ENCODE measurements at regions of chr16 and their contacts with region 1.

Region 1: DNA sequence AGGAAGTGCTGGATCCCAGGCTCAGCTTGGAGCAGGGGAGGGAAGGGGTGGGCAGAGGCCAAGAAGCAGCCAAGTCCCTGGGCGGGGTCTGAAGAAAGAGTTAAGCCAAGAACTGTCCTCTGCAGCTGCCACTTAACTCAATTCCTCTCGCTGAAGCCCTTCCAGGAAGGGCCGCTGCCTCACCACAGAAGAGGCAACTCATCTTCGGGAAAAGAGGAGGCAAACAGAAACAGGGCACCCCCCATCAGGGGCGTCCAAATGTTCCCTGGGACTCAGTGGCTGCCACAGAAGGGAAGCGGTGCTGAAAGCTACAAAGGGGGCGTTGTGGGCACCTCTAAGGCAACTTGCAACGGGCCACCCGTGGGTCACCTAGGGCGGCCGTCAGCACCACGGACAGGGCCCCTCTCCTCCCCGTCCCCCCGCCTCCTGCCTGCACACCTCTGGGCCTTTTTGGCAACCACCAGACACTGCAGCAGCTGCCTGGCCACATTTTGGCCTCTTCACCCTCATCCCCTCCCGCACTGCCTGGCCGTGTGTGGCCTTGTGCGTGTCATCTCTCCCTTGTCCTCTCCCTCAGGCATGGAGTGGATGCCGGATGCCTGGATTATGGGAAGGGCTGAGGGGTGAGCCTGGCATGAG is 2.5 kb downstream of the TLCD3B start:
- DNase-seq: no peak
- ATAC-seq: peak; percentile 32 to 74 (median 70)
- H3K4me3 ChIP-seq: no peak overlapping the region
- H3K27ac ChIP-seq: no peak overlapping the region
- H3K4me1 ChIP-seq: peaks cover 2% of the 10 kb centered on the region
- H3K27me3 ChIP-seq: peaks cover 0 to 60% (median 15%) of the 10 kb centered on the region in 3 donors
- CTCF ChIP-seq: no peak

Region 2: DNA sequence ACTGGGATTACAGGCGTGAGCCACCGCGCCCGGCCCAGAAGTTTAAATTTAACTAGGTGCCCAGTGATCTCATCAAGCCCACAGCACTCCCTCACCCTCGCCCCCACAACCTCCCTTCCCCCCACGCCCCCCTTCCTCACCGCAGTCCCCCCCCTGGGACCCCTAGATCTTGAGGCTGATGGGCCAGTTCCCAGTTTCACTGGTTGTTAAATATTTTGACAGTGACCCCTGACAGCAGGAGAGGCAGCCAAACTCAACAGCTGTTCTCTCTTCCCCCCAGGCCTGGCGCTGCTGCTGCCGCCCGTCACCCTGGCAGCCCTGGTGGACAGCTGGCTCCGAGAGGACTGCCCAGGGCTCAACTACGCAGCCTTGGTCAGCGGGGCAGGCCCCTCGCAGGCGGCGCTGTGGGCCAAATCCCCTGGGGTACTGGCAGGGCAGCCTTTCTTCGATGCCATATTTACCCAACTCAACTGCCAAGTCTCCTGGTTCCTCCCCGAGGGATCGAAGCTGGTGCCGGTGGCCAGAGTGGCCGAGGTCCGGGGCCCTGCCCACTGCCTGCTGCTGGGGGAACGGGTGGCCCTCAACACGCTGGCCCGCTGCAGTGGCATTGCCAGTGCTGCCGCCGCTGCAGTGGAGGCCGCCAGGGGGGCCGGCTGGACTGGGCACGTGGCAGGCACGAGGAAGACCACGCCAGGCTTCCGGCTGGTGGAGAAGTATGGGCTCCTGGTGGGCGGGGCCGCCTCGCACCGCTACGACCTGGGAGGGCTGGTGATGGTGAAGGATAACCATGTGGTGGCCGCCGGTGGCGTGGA is 334.0 kb before region 1 on chr16:
- intact Hi-C with region 1: loop called in 1 of 2 experiments (anchors 10 kb)
- DNase-seq: peak; percentile 58 to 83
- ATAC-seq: peak; percentile 93 to 95 (median 95)
- H3K4me3 ChIP-seq: no peak overlapping the region
- H3K27ac ChIP-seq: peak overlapping the region; percentile 34
- H3K4me1 ChIP-seq: no peaks in the 10 kb centered on the region
- H3K27me3 ChIP-seq: no peaks in the 10 kb centered on the region
- CTCF ChIP-seq: no peak

Region 3: GRCh38 chr16:30052671-30053372 is 24.3 kb after region 1 on chr16:
- intact Hi-C with region 1: no loop called
- DNase-seq: peak; percentile 94 to 97
- ATAC-seq: peak; percentile 92 to 97 (median 94)
- H3K4me3 ChIP-seq: peak overlapping the region; percentile 84
- H3K27ac ChIP-seq: no peak overlapping the region
- H3K4me1 ChIP-seq: peaks cover 7% of the 10 kb centered on the region
- H3K27me3 ChIP-seq: no peaks in the 10 kb centered on the region
- CTCF ChIP-seq: no peak

Region 4: GRCh38 chr16:30075507-30076275 is 47.1 kb after region 1 on chr16 and contains the start of gene PPP4C:
- intact Hi-C with region 1: no loop called
- DNase-seq: peak; percentile 94 to 95
- ATAC-seq: peak; percentile 86 to 89 (median 88)
- H3K4me3 ChIP-seq: peak within 1 kb of the TSS; percentile 76
- H3K27ac ChIP-seq: peak within 1 kb of the TSS; percentile 94
- H3K4me1 ChIP-seq: peaks cover 24% of the 10 kb centered on the region
- H3K27me3 ChIP-seq: no peaks in the 10 kb centered on the region
- CTCF ChIP-seq: no peak
- total RNA-seq, gene PPP4C: 38.1 to 64.5 (median 58.5) TPM